BJ (cell line): ENCODE measurements at regions of chr11 and their contacts with region 1.

Region 1: GRCh38 chr11:12281571-12282478 is 95.5 kb upstream of the PARVA start:
- DNase-seq: no peak
- H3K4me3 ChIP-seq: no peak overlapping the region
- H3K27me3 ChIP-seq: no peaks in the 10 kb centered on the region
- CTCF ChIP-seq: peak; percentile 88

Region 2: GRCh38 chr11:11798586-11799438 is 483.0 kb before region 1 on chr11:
- CTCF ChIA-PET with region 1: interaction called, 18 read pairs
- POLR2A ChIA-PET with region 1: no interaction called
- DNase-seq: no peak
- H3K4me3 ChIP-seq: no peak overlapping the region
- H3K27me3 ChIP-seq: peaks cover 2% of the 10 kb centered on the region; the same call in 1 of the 2 replicates
- CTCF ChIP-seq: peak; percentile 94

Region 3: DNA sequence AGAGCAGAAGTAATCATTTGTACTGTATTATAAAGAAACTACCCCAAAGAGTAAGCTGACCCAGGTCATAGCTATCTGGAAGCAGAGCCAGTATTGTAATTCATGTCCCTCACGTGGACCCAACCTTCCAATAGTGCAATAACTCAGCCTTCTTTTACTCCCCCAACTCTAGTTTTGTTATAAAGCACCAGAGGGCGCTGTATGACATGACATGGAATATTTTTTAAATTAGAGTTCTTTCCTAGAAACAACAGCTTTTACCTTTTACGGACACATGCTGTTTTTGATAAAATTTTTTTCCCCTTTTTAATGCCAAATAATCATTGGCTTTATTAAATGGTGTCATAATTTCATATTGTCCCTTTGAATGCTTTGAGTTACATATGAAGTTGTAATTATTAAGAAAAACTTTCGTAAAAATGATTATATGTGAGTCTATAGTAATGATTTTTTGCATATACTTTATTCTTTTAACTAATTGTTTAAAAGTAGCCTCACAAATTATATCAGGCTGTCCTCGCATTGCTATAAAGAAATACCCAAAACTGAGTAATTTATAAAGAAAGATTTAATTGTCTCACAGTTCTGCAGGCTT is 350.3 kb before region 1 on chr11:
- CTCF ChIA-PET with region 1: interaction called, 13 read pairs
- POLR2A ChIA-PET with region 1: no interaction called
- DNase-seq: no peak
- H3K4me3 ChIP-seq: no peak overlapping the region
- H3K27me3 ChIP-seq: no peaks in the 10 kb centered on the region
- CTCF ChIP-seq: peak; percentile 60

Region 4: DNA sequence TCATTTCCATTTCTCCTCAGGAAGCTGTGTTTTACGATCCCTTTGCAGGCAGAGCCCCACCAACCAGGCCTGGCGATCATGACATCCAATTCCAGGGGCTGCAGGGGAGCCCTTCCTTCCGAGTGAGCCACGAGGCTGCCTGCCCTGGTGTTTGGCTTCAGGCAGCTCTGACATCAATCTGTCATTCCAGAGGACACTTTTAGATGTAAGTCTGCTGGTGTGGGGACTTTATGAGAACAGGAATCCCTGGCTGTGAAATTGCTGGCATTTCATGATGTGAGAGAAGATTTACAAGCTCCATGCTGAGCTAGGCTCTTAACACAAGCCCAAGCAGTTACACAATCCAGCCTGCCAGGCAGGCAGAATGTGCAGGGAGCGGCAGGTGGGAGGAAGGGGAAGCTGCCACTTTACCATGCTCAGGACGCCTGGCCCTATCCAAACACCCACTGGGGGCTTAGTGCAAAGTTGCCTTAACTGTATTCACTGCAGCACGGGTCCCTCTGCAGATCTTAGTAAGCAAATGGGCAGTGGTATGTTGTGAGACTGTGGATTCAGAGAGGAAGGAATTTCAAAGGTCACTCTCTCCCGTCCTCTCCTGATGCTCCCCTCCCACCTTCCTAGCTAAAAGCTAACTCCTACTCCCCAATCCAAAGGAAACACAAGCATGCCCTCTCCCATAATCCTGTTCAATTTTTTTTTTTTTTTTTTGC is 214.9 kb before region 1 on chr11:
- CTCF ChIA-PET with region 1: interaction called, 14 read pairs
- POLR2A ChIA-PET with region 1: interaction called, 5 read pairs
- DNase-seq: peak; percentile 95
- H3K4me3 ChIP-seq: no peak overlapping the region
- H3K27me3 ChIP-seq: no peaks in the 10 kb centered on the region
- CTCF ChIP-seq: no peak

Region 5: DNA sequence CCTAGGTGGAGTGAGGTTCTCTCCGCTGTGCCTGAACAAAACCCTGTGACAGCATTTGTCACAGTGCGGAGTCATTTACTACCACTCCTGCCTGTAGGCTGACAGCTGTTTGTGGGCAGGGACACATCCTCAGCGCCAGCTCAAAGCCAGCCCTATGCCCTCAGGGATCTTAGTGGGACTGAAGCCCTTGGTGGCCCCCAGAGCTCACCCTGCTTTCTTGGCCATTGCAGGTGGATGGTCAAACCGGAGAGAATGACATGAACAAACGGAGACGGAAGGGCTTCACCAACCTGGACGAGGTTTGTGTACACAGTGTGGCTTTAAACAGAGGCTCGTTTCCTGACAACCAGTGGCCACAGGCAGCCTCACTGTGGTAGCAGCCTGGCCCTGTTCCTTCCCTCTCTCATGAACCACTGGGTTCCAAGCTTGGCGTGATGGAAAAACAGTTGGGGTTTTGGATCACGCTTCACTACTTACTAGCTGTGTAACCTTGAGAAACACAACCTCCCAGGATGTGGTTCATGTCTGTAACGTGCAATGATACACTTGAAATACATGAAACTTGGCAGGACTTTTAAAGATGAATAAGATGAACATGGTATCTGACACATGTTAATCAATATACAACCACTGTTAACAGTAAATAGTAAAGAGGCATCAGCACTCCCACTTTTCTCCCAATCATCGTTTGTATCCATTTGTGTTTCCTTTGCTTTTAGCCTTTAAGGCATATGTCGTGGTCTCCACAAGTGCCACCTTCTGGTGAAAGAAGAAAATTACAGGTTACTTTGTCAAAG is 45.7 kb before region 1 on chr11:
- CTCF ChIA-PET with region 1: interaction called, 11 read pairs
- POLR2A ChIA-PET with region 1: no interaction called
- DNase-seq: no peak
- H3K4me3 ChIP-seq: no peak overlapping the region
- H3K27me3 ChIP-seq: no peaks in the 10 kb centered on the region
- CTCF ChIP-seq: peak; percentile 66